OCI-LY7 (cell line): ENCODE measurements at regions of chr11 and their contacts with region 1.

Region 1: GRCh38 chr11:34075178-34075820 is 23.8 kb downstream of the CAPRIN1 start:
- DNase-seq: no peak
- H3K4me3 ChIP-seq: no peak overlapping the region
- H3K27ac ChIP-seq: no peak overlapping the region
- H3K4me1 ChIP-seq: peaks cover 3% of the 10 kb centered on the region
- CTCF ChIP-seq: no peak

Region 2: DNA sequence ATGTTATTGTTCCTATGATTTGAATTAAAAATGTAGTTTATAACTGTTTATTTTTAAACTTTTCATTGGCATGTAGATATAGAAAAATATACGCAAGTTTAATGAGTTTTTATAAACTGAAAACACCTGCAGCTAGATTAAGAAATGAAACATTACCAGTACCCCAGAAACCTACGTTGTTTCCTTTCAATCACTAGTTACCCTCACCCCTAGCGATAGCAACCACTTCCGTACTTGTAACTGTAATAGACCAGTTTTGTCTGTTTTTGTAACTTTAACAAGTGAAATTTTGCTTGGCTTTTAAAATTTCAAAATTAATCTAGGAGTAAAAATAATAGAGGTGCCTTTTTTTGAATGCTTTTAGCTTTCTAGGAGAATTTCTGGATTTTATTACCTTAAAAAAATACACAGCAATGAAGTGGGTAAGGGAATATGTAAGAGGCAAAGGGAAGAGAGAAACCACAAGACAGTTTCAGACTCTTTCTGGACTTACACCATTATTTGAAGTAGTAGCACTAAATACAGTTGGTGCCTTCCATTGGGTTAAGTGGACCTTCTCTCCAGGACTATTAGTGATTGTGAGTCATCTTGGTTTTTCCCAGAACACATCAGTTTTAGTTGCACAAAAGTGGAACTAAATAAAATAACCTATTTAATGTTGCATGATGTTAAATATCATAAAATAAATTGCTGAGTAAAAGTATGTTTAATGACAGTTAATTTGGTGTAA is 11.4 kb after region 1 on chr11:
- CTCF ChIA-PET with region 1: no interaction called
- POLR2A ChIA-PET with region 1: interaction called, 13 read pairs
- intact Hi-C with region 1: no loop called
- DNase-seq: no peak
- H3K4me3 ChIP-seq: no peak overlapping the region
- H3K27ac ChIP-seq: peak overlapping the region; percentile 47
- H3K4me1 ChIP-seq: peaks cover 8% of the 10 kb centered on the region
- CTCF ChIP-seq: no peak

Region 3: GRCh38 chr11:34091825-34092224 is 16.5 kb after region 1 on chr11:
- CTCF ChIA-PET with region 1: no interaction called
- POLR2A ChIA-PET with region 1: interaction called, 13 read pairs
- intact Hi-C with region 1: loop called (anchors 2 kb)
- DNase-seq: no peak
- H3K4me3 ChIP-seq: no peak overlapping the region
- H3K27ac ChIP-seq: no peak overlapping the region
- H3K4me1 ChIP-seq: no peaks in the 10 kb centered on the region
- CTCF ChIP-seq: no peak